ENCODE measurements at regions of chr17 and their contacts with region 1.

Region 1: GRCh38 chr17:37358830-37359681 is 16.7 kb upstream of the C17orf78 start:
- DNase-seq: peak; percentile 90 to 93 (median 91)
- H3K4me3 ChIP-seq: peak overlapping the region; percentile 73
- H3K4me3 Mint-ChIP-seq: peak overlapping the region; percentile 78 to 93 (median 89)
- H3K27ac ChIP-seq: peak overlapping the region; percentile 79
- H3K27ac Mint-ChIP-seq: peak overlapping the region in 7 of 8 donors; percentile 77 to 98 (median 93)
- H3K4me1 ChIP-seq: peaks cover 13% of the 10 kb centered on the region
- H3K4me1 Mint-ChIP-seq: peaks cover 13 to 26% (median 23%) of the 10 kb centered on the region in 3 donors
- H3K27me3 ChIP-seq: no peaks in the 10 kb centered on the region
- H3K27me3 Mint-ChIP-seq: no peaks in the 10 kb centered on the region

Region 2: DNA sequence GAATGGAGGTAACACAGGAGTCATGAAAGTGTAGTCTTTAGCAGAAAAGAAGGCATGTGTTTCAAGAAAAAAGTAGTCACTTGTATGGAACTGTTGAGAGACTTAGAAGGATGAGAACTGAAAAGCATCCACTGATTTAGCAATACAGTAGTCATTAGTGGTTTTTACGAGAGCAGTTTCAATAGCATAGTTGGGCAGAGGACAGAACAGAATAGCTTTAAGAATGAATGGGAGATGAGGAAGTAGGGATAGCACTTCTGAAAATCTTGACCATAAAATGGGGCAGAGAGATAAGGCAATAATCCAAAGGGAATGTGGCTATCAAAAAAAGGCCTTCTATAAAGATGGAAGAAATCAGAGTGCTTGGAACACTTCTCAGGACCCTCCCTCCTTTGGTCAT is 48.1 kb before region 1 on chr17:
- CTCF ChIA-PET with region 1: no interaction called
- POLR2A ChIA-PET with region 1: no interaction called
- DNase-seq: no peak
- H3K4me3 ChIP-seq: no peak overlapping the region
- H3K4me3 Mint-ChIP-seq: no peak overlapping the region
- H3K27ac ChIP-seq: no peak overlapping the region
- H3K27ac Mint-ChIP-seq: no peak overlapping the region
- H3K4me1 ChIP-seq: no peaks in the 10 kb centered on the region
- H3K4me1 Mint-ChIP-seq: no peaks in the 10 kb centered on the region
- H3K27me3 ChIP-seq: no peaks in the 10 kb centered on the region
- H3K27me3 Mint-ChIP-seq: no peaks in the 10 kb centered on the region

Region 3: DNA sequence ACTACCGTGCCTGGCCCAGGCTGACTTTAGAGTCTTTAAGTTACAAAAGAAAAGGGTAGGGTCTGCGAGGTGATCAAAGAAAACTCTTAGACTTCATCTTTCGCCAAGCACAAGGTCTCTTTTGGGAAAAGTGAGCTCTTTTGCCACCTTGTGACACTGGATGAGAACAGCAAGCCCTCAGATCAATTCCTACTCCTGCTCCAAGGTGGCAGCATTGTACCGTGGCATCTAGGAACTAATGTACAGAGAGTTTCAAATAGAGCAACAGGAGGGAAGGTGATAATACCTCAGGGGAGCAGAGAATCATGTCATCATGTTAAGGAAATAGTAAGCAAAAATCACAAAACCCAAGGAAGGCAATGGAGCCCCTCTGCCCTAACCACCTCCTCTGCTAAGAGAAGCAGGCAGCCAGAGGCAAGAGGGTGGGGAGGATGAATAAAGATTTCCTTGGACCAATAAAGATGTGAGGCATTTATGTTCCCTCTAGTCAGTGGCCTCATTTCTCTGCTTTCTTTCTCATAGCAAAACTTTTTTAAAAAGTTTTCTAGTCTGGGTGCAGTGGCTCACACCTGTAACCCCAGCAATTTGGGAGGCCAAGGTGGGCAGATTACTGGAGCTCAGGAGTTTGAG is 14.6 kb after region 1 on chr17:
- CTCF ChIA-PET with region 1: interaction called, 11 read pairs
- POLR2A ChIA-PET with region 1: no interaction called
- DNase-seq: peak; percentile 14 to 70 (median 47)
- H3K4me3 ChIP-seq: no peak overlapping the region
- H3K4me3 Mint-ChIP-seq: no peak overlapping the region
- H3K27ac ChIP-seq: no peak overlapping the region
- H3K27ac Mint-ChIP-seq: peak overlapping the region in 1 of 8 donors; percentile 78
- H3K4me1 ChIP-seq: no peaks in the 10 kb centered on the region
- H3K4me1 Mint-ChIP-seq: peaks cover 0 to 6% (median 4%) of the 10 kb centered on the region in 3 donors
- H3K27me3 ChIP-seq: no peaks in the 10 kb centered on the region
- H3K27me3 Mint-ChIP-seq: no peaks in the 10 kb centered on the region

Region 4: GRCh38 chr17:37392024-37392590 is 33.1 kb after region 1 on chr17:
- CTCF ChIA-PET with region 1: no interaction called
- POLR2A ChIA-PET with region 1: no interaction called
- DNase-seq: no peak
- H3K4me3 ChIP-seq: no peak overlapping the region
- H3K4me3 Mint-ChIP-seq: peak overlapping the region in 1 of 7 donors; percentile 15
- H3K27ac ChIP-seq: no peak overlapping the region
- H3K27ac Mint-ChIP-seq: peak overlapping the region in 6 of 8 donors; percentile 6 to 58 (median 40)
- H3K4me1 ChIP-seq: no peaks in the 10 kb centered on the region
- H3K4me1 Mint-ChIP-seq: peaks cover 7 to 14% (median 13%) of the 10 kb centered on the region in 3 donors
- H3K27me3 ChIP-seq: no peaks in the 10 kb centered on the region
- H3K27me3 Mint-ChIP-seq: no peaks in the 10 kb centered on the region

Region 5: DNA sequence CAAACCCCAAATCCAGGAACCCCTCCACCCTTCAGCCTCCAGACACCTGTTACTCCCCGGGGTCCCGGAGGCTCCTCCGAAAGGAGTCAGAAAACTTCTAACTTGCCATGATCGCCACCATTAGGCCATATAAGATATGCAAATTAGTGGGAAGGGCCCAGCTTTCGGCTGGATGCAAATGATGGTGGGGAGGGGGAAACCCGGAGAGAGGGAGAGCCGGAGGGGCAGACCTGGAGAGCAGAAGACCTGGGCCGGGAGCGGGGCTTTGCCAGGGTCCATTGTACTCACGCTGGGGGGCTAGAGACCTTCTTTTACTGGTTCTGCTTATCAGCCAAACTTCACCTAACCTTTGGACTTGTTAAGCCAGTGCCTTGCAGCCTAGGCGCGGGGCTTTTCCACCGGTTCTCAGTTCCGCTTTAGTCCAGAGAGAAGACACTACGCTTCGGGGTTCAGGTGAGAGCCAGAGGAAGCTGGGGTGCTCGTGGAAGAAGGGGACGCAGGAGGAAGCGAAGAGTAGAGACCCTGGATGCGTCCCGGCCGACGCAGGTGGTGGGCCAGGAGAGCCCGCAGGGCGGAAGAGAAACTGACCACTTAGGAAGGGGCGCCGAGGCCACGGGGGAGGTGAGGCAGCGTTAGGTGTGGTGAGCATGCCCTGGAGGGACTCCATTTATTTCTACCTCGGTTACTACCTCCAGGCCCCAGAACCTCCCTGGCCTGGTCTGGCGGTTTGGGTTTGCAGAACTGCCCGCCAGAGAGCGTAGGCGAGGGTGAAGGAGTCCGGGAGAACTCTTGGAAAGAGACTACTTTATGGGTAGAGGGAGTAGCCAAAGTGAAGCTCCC is 386.1 kb after region 1 on chr17 and contains the start of gene HNF1B:
- CTCF ChIA-PET with region 1: no interaction called
- POLR2A ChIA-PET with region 1: no interaction called
- DNase-seq: no peak
- H3K4me3 ChIP-seq: no peak within 1 kb of the TSS
- H3K4me3 Mint-ChIP-seq: peak within 1 kb of the TSS; percentile 27 to 83 (median 45)
- H3K27ac ChIP-seq: no peak within 1 kb of the TSS
- H3K27ac Mint-ChIP-seq: no peak within 1 kb of the TSS
- H3K4me1 ChIP-seq: peaks cover 32% of the 10 kb centered on the region
- H3K4me1 Mint-ChIP-seq: peaks cover 19 to 40% (median 26%) of the 10 kb centered on the region in 3 donors
- H3K27me3 ChIP-seq: peaks cover 51% of the 10 kb centered on the region
- H3K27me3 Mint-ChIP-seq: peaks cover 52 to 81% of the 10 kb centered on the region in 2 donors
- total RNA-seq, gene HNF1B: 0.22 to 0.73 TPM

Measured in CD8-positive, alpha-beta memory T cell (primary cell).